ENCODE measurements at regions of chr9 and their contacts with region 1.

Region 1: GRCh38 chr9:32755730-32756129 is 27.6 kb upstream of the TMEM215 start:
- DNase-seq: no peak

Region 2: DNA sequence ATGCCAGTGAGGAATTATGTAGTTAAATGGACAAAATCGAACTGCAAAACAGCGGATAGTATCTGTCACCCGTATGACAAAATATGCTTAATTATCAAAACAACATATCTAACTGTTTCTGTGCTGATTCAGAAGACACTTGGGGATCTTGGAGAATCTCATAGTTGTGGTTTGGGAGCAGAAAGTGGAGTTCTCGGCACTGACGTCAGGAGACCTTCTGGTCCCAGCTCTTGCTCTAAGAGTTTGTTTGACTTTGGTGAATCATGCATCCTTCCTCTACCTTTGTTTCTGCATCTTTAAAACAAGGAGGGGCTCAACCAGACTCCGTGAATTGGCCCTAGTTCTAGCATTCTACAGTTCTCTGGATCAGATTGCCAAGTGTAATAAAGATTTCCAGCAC is 83.3 kb before region 1 on chr9:
- in situ Hi-C with region 1: loop called (anchors 25 kb)
- DNase-seq: no peak

Region 3: GRCh38 chr9:32866273-32866672 is 110.5 kb after region 1 on chr9:
- in situ Hi-C with region 1: no loop called
- DNase-seq: no peak

Region 4: GRCh38 chr9:32954642-32955041 is 198.9 kb after region 1 on chr9:
- in situ Hi-C with region 1: no loop called
- DNase-seq: no peak